Activated naive CD4-positive, alpha-beta T cell treated with anti-CD3 and anti-CD28 coated beads for 36 hours (primary cell): ENCODE measurements at regions of chr6 and their contacts with region 1.

Region 1: GRCh38 chr6:32971581-32972352 is 3.4 kb downstream of the BRD2 start:
- DNase-seq: peak; percentile 100
- H3K4me3 Mint-ChIP-seq: peak overlapping the region; percentile 93
- H3K27ac Mint-ChIP-seq: peak overlapping the region; percentile 100
- H3K4me1 Mint-ChIP-seq: peaks cover 24% of the 10 kb centered on the region
- H3K27me3 Mint-ChIP-seq: no peaks in the 10 kb centered on the region

Region 2: DNA sequence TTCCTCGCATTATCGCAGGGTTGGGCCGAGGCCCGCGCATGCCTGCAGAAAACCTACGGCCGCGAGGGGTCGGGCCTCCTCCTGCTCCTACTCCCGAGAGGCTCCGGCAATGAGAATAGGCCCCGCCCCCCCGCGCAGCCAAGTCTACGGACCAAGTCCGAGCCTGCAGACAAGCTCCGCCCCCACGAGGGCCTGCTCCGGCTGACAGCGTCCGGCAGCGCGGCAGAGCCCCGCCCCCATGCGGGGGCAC is 776.2 kb before region 1 on chr6:
- CTCF ChIA-PET with region 1: no interaction called
- intact Hi-C with region 1: loop called (anchors 1 kb)
- DNase-seq: peak; percentile 100
- H3K4me3 Mint-ChIP-seq: peak overlapping the region; percentile 97
- H3K27ac Mint-ChIP-seq: peak overlapping the region; percentile 95
- H3K4me1 Mint-ChIP-seq: peaks cover 36% of the 10 kb centered on the region
- H3K27me3 Mint-ChIP-seq: no peaks in the 10 kb centered on the region

Region 3: GRCh38 chr6:32210191-32210601 is 761.6 kb before region 1 on chr6:
- CTCF ChIA-PET with region 1: no interaction called
- intact Hi-C with region 1: no loop called
- DNase-seq: no peak
- H3K4me3 Mint-ChIP-seq: no peak overlapping the region
- H3K27ac Mint-ChIP-seq: no peak overlapping the region
- H3K4me1 Mint-ChIP-seq: no peaks in the 10 kb centered on the region
- H3K27me3 Mint-ChIP-seq: no peaks in the 10 kb centered on the region

Region 4: GRCh38 chr6:32327103-32327502 is 644.7 kb before region 1 on chr6:
- CTCF ChIA-PET with region 1: no interaction called
- intact Hi-C with region 1: no loop called
- DNase-seq: no peak
- H3K4me3 Mint-ChIP-seq: no peak overlapping the region
- H3K27ac Mint-ChIP-seq: no peak overlapping the region
- H3K4me1 Mint-ChIP-seq: no peaks in the 10 kb centered on the region
- H3K27me3 Mint-ChIP-seq: peaks cover 1% of the 10 kb centered on the region

Region 5: GRCh38 chr6:32894080-32895005 is 77.4 kb before region 1 on chr6:
- CTCF ChIA-PET with region 1: interaction called, 4 read pairs
- intact Hi-C with region 1: loop called (anchors 1 kb)
- DNase-seq: peak; percentile 97
- H3K4me3 Mint-ChIP-seq: peak overlapping the region; percentile 97
- H3K27ac Mint-ChIP-seq: peak overlapping the region; percentile 96
- H3K4me1 Mint-ChIP-seq: peaks cover 37% of the 10 kb centered on the region
- H3K27me3 Mint-ChIP-seq: no peaks in the 10 kb centered on the region

Region 6: GRCh38 chr6:32952817-32953739 is 18.7 kb before region 1 on chr6 and contains the start of gene HLA-DMA:
- CTCF ChIA-PET with region 1: interaction called, 167 read pairs
- intact Hi-C with region 1: loop called (anchors 1 kb)
- DNase-seq: peak; percentile 87
- H3K4me3 Mint-ChIP-seq: peak within 1 kb of the TSS; percentile 73
- H3K27ac Mint-ChIP-seq: peak within 1 kb of the TSS; percentile 60
- H3K4me1 Mint-ChIP-seq: peaks cover 47% of the 10 kb centered on the region
- H3K27me3 Mint-ChIP-seq: no peaks in the 10 kb centered on the region
- total RNA-seq, gene HLA-DMA: 12.7 to 14.5 TPM

Region 7: DNA sequence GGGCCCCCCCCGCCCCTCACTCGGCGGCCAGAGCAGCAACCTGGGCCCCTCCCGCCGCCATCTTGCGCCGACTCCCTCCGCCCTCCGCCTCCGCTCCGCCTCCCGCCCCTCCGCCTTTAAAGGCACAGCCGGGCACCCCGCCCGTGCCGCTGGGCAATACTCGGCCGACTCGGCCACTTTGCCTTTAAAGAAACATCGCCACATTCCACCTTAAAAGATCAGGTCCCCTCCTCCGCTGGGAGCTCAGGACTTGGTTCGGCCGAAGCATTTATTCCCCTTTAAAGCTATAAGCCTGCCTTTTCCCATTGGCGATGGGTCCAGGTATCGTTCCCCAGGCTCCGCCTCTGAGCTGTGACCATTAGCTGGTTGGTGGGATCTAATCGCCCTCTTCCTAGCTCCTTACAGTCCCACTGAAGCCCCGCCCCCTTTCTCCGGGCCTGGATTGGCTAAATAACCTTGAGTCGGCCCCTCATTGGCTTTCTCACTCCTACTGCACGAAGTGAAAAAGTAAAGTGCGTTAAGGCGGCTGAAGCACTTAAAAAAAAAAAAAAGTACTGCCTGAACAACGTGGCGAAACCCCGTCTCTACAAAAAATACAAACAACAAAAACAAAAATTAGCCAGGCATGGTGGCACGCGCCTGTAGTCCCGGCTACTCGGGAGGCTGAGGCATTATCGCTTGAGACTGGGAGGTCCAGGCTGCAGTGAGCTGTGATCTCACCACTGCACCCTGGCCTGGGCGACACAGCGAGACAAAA is 346.1 kb after region 1 on chr6 and contains the start of gene ZBTB22:
- CTCF ChIA-PET with region 1: interaction called, 3 read pairs
- intact Hi-C with region 1: loop called (anchors 5 kb)
- DNase-seq: peak; percentile 97
- H3K4me3 Mint-ChIP-seq: peak within 1 kb of the TSS; percentile 94
- H3K27ac Mint-ChIP-seq: peak within 1 kb of the TSS; percentile 95
- H3K4me1 Mint-ChIP-seq: peaks cover 72% of the 10 kb centered on the region
- H3K27me3 Mint-ChIP-seq: no peaks in the 10 kb centered on the region
- total RNA-seq, gene ZBTB22: 8.8 to 9.0 TPM